ENCODE measurements at regions of chr10 and their contacts with region 1.

Region 1: GRCh38 chr10:127715782-127716378 is 21.1 kb upstream of the FOXI2 start:
- DNase-seq: peak; percentile 34
- ATAC-seq: no peak
- H3K4me3 ChIP-seq: no peak overlapping the region
- H3K27ac ChIP-seq: no peak overlapping the region
- H3K4me1 ChIP-seq: no peaks in the 10 kb centered on the region
- H3K27me3 ChIP-seq: 0 out of 2 replicates have a peak, but pooled peaks cover 11% of the 10 kb centered on the region
- CTCF ChIP-seq: peak; percentile 53

Region 2: GRCh38 chr10:127853868-127854768 is 138.2 kb after region 1 on chr10:
- CTCF ChIA-PET with region 1: interaction called, 3 read pairs
- POLR2A ChIA-PET with region 1: no interaction called
- intact Hi-C with region 1: loop called (anchors 2 kb)
- DNase-seq: peak; percentile 73
- ATAC-seq: peak; percentile 89
- H3K4me3 ChIP-seq: no peak overlapping the region
- H3K27ac ChIP-seq: no peak overlapping the region
- H3K4me1 ChIP-seq: no peaks in the 10 kb centered on the region
- H3K27me3 ChIP-seq: peaks cover 3% of the 10 kb centered on the region; the same call in 1 of the 2 replicates
- CTCF ChIP-seq: peak; percentile 71

Region 3: DNA sequence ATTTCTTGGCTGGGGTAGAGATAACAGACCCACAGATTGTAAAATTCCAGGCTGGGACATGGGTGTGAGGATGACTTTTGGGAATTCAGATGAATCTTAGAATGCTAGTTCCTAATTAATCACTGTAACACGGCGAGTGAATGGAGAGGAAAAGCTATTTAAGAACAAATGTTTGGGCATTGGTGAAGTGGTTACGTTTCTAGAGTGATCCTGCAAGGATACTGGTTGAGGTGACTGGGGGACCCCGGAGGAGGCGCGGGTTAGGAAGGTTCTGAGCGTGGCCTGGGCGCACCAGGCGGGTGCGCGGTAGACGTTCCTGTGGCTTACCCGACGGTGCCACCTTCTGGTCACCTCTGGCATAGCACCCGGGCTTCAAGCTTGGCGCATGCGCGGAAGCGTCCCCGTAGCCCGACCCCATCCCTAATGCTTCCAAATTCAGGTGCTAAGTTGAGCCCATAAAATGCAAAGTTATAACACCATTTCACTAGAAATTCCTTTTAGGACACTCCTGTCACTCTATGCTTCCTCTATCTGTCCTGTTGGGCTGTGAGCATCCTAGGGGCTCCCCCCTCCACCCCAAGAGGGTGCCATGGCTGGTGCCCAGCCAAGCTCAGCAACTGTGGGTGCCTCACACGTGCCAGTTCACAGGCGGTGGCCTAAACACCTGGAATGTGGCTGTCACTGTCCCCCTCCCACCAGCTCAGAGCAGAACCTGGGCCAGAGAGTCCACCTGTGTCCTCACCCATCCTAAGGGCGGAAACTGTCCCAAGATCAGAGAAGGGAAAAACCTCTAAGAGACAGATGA is 295.5 kb after region 1 on chr10:
- CTCF ChIA-PET with region 1: no interaction called
- POLR2A ChIA-PET with region 1: no interaction called
- intact Hi-C with region 1: loop called (anchors 5 kb)
- DNase-seq: peak; percentile 74
- ATAC-seq: peak; percentile 87
- H3K4me3 ChIP-seq: no peak overlapping the region
- H3K27ac ChIP-seq: no peak overlapping the region
- H3K4me1 ChIP-seq: peaks cover 11% of the 10 kb centered on the region
- H3K27me3 ChIP-seq: no peaks in the 10 kb centered on the region
- CTCF ChIP-seq: peak; percentile 85

Measured in PC-3 (cell line).